Adrenal gland (tissue), 19 donors: ENCODE measurements at regions of chr9 and their contacts with region 1.

Region 1: DNA sequence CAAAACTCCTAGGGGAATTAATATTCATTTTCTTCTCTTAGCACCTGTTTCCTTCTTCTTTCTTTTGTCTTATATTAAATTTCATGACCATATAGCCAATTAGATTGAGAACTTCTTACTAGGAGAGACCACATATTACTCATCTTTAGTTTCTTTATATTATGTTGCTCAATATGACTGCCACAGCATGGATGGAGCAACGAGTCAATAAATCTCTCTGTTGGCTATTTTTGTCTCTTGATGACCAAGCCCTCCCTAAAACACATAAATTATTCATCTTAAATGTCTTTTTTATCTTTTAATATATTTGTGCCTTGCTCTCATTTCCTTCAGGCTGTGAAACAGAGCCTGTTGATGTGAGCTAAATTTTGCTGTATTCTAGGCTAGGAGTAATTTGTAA is 123.0 kb downstream of the ADAMTSL1 start:
- DNase-seq: peak in 2 of 7 donors; percentile 18 to 25
- H3K4me3 ChIP-seq: no peak overlapping the region
- H3K27ac ChIP-seq: no peak overlapping the region
- H3K4me1 ChIP-seq: peaks cover 5 to 25% of the 10 kb centered on the region in 2 donors
- H3K27me3 ChIP-seq: no peaks in the 10 kb centered on the region
- CTCF ChIP-seq: no peak
- POLR2A ChIP-seq: no peak

Region 2: GRCh38 chr9:18489861-18490260 is 107.1 kb before region 1 on chr9:
- intact Hi-C with region 1: loop called in 1 of 2 experiments (anchors 10 kb)
- DNase-seq: peak in 3 of 7 donors; percentile 14 to 55 (median 28)
- H3K4me3 ChIP-seq: no peak overlapping the region
- H3K27ac ChIP-seq: no peak overlapping the region
- H3K4me1 ChIP-seq: peaks cover 0 to 6% of the 10 kb centered on the region in 2 donors
- H3K27me3 ChIP-seq: no peaks in the 10 kb centered on the region
- CTCF ChIP-seq: no peak
- POLR2A ChIP-seq: no peak

Region 3: DNA sequence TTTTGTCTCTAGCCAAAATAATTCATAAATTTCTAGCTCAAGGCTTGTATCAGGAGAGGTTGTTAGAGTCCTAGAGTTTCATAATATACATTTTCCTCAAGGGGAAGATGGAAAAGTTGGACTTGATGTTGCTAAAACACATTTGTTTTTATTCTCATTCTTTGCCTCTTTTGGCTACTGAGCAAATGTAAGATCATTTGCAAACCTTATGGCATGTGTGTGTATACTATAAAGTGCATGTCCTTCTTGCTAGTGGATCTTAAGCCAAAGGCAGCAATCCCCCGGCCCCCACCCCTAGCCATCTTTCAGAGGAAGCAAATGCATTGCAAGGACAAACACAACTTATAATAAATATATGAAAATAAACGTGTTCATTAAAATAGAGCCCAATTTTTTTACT is 80.0 kb before region 1 on chr9:
- intact Hi-C with region 1: no loop called
- DNase-seq: no peak
- H3K4me3 ChIP-seq: no peak overlapping the region
- H3K27ac ChIP-seq: no peak overlapping the region
- H3K4me1 ChIP-seq: no peaks in the 10 kb centered on the region
- H3K27me3 ChIP-seq: no peaks in the 10 kb centered on the region
- CTCF ChIP-seq: no peak
- POLR2A ChIP-seq: no peak

Region 4: DNA sequence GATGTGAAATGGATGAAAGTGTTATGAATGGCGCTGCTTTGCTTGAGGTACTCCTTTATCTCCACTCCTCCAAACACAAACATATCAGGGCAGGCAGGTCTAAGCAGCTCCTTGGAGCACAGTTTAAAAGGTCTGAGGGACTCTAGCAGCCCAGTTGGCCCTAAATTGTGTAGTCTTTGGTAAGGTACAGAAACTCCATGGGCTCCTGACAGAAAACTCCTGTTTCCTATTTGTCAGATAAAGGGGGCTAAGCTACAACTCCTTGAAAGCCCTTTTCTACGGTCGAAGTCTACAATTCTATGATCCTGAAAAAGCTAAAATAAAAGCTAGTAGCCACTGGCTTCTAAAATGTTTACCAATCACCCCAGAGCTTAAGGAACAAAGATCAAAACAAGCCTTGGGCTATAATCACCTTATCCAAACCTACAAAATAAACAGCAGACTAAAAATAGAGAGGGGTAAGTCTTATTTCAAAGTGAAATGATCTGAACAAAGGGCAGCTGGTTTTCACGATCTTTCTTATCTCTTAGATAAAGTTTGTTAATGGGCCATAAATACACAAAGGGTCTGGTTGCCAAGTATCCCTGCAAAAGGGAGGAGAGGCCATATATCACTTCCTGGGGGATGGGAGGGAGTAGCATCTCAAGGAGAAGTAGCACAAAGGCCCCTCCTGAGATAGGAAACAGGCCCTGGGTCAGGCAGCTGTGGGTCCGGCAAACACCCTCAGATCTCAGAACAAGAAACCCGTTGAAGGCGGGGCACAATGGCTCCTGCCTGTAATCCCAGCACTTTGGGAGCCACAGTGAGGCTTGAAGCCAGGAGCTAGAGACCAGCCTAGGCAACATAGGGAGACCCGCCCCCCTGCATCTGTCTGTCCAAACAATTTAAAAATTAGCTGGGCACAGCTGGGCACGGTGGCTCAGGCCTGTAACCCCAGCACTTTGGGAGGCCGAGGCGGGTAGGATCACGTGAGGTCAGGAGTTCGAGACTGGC is 605.3 kb after region 1 on chr9:
- intact Hi-C with region 1: no loop called
- DNase-seq: peak in 6 of 7 donors; percentile 22 to 65 (median 41)
- H3K4me3 ChIP-seq: no peak overlapping the region
- H3K27ac ChIP-seq: no peak overlapping the region
- H3K4me1 ChIP-seq: peaks cover 11 to 18% of the 10 kb centered on the region in 2 donors
- H3K27me3 ChIP-seq: no peaks in the 10 kb centered on the region
- CTCF ChIP-seq: no peak
- POLR2A ChIP-seq: no peak

Region 5: DNA sequence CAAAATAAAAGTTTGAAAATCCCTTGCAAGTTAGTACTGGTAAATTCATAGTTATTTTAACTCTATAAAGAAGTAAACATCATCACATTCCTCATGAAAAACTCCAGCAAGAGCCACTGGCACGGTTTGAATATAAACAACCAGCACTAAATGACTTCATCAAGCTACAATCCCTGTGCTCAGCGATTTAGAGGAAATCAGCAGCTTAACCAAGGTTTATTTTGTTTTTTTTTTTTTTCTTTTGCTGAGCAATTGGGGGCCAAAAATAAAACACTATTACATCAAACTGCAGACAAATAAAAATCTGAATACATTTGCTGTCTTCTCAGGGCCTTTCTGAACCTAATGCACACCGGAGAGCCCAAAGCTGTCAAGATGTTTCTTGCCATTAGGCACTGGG is 1298.1 kb after region 1 on chr9:
- intact Hi-C with region 1: no loop called
- DNase-seq: no peak
- H3K4me3 ChIP-seq: no peak overlapping the region
- H3K27ac ChIP-seq: no peak overlapping the region
- H3K4me1 ChIP-seq: no peaks in the 10 kb centered on the region
- H3K27me3 ChIP-seq: no peaks in the 10 kb centered on the region
- CTCF ChIP-seq: no peak
- POLR2A ChIP-seq: no peak